OCI-LY7 (cell line): ENCODE measurements at regions of chr4 and their contacts with region 1.

Region 1: DNA sequence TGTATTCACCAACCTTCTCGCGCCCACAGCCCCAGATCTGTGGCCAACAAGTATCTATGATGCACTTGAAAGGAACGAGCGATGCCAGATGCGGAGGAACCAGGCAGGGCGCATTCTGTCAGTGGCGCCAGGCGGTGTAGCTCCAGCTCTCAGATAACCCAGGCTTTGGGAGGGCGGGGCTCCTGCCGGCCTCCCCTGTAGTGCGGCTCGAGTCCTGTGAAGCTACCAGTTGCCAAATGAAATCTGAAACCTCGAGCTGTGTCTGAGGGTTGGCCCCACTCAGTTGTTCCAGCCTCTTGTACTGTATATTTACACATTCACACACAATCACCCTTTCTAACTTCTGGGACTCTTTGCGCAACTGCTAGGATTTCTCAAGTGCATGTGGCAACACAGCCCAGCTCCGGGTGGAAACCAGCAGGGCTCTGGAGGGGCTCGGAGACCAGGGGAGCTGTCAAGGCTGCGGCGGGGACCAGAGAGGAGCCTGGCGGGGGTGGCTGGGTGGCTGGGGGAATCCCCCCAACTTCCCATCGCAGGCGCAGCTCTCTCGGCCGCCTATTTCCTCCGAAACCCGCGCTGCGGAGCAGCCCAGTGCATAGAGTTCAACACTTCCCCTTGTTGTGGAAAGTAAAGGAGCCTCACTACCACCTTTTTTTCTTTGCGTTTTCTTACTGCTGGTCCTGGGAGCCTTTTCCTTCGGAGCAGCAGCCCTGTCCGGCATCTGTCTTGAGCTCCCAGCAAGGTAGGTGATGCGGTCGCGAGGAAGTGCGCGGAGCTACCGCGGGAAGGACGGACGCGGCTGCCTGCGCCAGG is at the start of gene ARHGAP24:
- DNase-seq: peak; percentile 32
- H3K4me3 ChIP-seq: peak within 1 kb of the TSS; percentile 60
- H3K27ac ChIP-seq: no peak within 1 kb of the TSS
- H3K4me1 ChIP-seq: no peaks in the 10 kb centered on the region
- CTCF ChIP-seq: no peak
- total RNA-seq, gene ARHGAP24: 0.75 and 0.88 TPM in 2 replicates

Region 2: GRCh38 chr4:85448869-85449626 is 26.0 kb before region 1 on chr4:
- CTCF ChIA-PET with region 1: interaction called, 4 read pairs
- POLR2A ChIA-PET with region 1: interaction called, 18 read pairs
- intact Hi-C with region 1: loop called (anchors 1 kb)
- DNase-seq: peak; percentile 49
- H3K4me3 ChIP-seq: no peak overlapping the region
- H3K27ac ChIP-seq: peak overlapping the region; percentile 28
- H3K4me1 ChIP-seq: peaks cover 16% of the 10 kb centered on the region
- CTCF ChIP-seq: no peak

Region 3: DNA sequence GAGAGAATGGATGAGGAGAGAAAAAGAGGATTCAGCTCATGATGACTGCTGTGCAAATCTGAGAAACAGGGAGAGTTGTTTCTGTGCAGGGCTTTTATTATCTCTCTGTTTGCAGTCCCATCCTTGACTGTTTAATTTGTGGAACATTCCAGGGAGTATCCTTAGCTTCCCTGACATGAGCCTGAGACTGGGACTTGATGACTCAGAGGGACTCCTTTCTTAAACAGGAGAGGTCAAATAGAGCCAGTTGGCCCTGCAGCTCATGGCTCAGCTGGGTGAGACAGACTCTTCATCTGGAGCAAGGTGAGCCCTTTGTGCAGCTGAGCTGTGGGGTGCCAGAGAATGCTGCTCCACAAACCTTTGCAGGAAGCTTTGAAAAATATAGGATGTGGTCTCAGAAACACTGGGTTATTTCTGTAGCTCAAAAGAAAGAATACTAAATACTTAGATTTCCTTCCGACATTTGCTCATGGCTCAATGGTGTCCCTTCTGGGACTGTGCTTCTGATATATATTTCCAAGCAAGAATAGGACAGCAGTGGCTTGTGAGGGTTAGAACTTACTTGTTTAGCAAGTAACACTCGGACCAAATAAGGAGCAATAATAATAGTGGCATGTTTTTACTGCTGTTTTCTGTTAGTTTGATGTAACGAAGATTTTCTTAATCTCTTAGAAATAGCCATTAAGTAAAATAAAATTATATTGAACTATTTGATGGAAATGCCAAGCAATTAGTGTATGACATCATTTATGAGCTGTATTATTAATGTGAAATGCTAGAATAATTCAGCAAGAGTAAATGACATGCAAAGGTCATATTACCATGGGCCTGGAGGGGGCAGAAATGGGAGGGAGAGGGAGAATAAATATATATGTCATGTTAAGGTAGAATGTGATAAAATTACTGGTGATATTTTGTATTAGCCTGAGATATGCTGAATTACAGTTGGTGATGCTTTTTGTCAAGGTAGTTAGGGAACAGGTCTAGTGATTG is 14.5 kb after region 1 on chr4:
- CTCF ChIA-PET with region 1: interaction called, 7 read pairs
- POLR2A ChIA-PET with region 1: interaction called, 31 read pairs
- intact Hi-C with region 1: no loop called
- DNase-seq: no peak
- H3K4me3 ChIP-seq: no peak overlapping the region
- H3K27ac ChIP-seq: no peak overlapping the region
- H3K4me1 ChIP-seq: peaks cover 6% of the 10 kb centered on the region
- CTCF ChIP-seq: no peak